ENCODE measurements at regions of chr17 and their contacts with region 1.

Region 1: DNA sequence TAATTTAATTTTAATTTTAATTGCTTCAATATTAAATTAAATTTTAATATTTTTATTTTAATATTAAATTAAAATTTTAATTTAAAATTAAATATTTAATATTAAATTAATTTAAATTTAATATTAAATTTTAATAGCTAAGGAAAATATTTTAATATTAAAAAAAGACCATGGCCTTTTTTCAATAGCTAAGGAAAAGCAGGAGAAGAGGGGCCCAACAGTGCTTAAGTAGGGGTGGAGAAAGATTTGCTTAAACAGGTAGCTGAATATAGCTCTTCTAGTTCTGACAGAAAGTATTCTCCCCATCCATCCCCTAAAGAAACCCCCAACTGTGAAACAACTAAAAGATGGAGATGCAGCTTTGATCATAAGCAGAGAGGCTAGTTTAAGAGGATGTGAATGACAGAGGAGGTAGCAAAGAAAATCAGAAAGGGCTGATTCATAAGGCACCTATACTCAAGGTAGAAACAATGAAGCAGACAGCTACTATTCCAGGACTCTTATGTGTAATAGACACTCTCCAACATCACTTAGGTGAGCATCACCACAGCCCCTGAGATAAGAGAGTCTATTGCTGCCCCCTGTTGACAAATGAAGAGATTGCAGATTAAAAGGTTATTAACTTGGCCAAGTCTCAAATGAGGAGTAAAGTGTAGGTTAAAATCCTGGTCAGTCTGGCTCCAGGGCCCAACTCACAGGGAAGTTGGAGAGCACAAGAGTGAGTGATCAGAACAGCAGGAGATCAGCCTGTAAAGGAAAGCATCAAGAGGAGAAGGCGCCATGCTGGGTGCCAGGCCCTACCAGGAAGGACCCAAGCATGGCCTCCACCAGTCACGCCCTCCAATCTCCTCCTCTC is 7.8 kb upstream of the RNASEK start:
- DNase-seq: peak; percentile 49 to 73
- H3K4me3 ChIP-seq: no peak overlapping the region
- H3K27ac ChIP-seq: no peak overlapping the region
- H3K4me1 ChIP-seq: no peaks in the 10 kb centered on the region
- H3K27me3 ChIP-seq: no peaks in the 10 kb centered on the region
- CTCF ChIP-seq: peak; percentile 95

Region 2: GRCh38 chr17:5971969-5972368 is 1032.7 kb before region 1 on chr17:
- CTCF ChIA-PET with region 1: interaction called, 17 read pairs
- POLR2A ChIA-PET with region 1: no interaction called
- intact Hi-C with region 1: no loop called
- DNase-seq: no peak
- H3K4me3 ChIP-seq: no peak overlapping the region
- H3K27ac ChIP-seq: no peak overlapping the region
- H3K4me1 ChIP-seq: no peaks in the 10 kb centered on the region
- H3K27me3 ChIP-seq: peaks cover 55% of the 10 kb centered on the region
- CTCF ChIP-seq: no peak

Region 3: DNA sequence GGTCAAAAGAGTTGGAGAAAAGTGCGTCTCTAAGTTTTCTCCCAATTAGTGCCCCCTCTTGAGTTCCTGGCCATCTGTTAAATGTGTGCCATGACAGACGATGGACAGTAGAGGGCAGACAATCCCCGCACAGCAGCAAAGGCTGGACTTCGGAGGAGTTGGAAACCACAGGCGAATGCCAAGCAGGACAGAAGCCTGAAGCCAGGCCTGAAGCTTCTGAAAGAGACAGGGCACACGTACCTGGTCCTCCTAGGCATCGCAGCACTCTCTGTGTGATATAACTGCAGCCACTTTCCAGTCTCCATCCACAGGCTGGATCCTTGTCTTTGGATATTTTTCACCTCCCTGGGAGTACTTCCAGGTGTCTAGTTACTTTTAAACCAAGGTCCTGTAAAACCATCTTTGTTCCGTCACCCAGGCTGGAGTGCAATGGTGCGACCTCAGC is 338.5 kb before region 1 on chr17:
- CTCF ChIA-PET with region 1: interaction called, 11 read pairs
- POLR2A ChIA-PET with region 1: no interaction called
- intact Hi-C with region 1: loop called (anchors 1 kb)
- DNase-seq: peak; percentile 67 to 84
- H3K4me3 ChIP-seq: no peak overlapping the region
- H3K27ac ChIP-seq: no peak overlapping the region
- H3K4me1 ChIP-seq: peaks cover 37% of the 10 kb centered on the region
- H3K27me3 ChIP-seq: no peaks in the 10 kb centered on the region
- CTCF ChIP-seq: peak; percentile 96

Region 4: DNA sequence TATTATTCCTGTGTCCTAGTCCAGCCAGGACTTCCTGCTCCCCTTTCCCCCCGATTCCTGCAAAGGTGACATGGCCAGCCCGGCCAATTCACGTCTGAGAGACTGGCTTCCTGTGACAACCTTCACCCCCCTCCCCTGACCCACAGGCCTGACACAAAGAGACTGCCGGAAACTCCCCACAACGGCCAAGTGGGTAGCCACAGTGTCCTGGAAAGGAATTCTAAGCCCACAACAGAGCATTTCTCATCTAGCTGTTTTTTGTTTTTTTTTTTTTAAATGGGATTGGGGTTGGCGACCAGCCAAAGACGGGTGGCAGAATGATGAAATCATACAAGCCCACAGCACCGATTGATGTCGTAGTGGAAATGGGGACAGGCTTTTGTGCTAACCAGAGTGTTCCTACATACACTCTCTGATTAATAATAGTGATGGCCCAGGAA is 251.6 kb before region 1 on chr17:
- CTCF ChIA-PET with region 1: no interaction called
- POLR2A ChIA-PET with region 1: no interaction called
- intact Hi-C with region 1: no loop called
- DNase-seq: peak in 1 of 2 experiments; percentile 60
- H3K4me3 ChIP-seq: peak overlapping the region; percentile 10; the same call in 1 of the 2 replicates
- H3K27ac ChIP-seq: peak overlapping the region; percentile 94
- H3K4me1 ChIP-seq: peaks cover 22% of the 10 kb centered on the region
- H3K27me3 ChIP-seq: no peaks in the 10 kb centered on the region
- CTCF ChIP-seq: no peak

Region 5: DNA sequence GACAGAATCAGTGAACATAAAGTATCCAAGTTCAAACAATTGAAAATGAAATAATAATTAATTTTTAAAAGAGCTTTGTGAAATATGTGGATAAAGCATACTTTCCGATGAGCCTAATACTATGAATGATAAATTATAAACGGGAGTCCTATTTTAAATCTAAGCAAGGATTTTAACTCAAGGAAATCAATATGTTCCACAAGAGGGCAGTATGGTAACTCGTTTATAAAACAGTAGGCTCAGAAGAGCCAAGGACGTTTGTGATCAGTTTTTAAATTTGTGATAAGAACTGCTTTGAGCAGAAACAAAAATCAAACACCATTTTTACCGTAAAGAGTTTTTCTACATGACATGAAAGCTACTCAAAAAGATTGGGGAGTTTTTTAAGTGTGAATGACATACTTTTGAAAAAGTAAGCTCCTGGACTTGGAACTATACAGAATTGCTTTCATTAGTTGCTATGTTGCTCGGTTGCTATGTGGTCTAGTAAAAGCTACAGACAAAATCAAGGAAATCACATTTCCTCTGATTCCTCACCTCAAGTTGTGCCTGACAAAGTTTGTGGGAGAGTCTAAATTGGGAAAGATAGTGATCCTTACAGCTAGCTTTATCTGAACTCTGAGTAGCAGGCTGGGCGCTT is 161.3 kb before region 1 on chr17:
- CTCF ChIA-PET with region 1: interaction called, 9 read pairs
- POLR2A ChIA-PET with region 1: no interaction called
- intact Hi-C with region 1: loop called (anchors 2 kb)
- DNase-seq: peak in 1 of 2 experiments; percentile 49
- H3K4me3 ChIP-seq: no peak overlapping the region
- H3K27ac ChIP-seq: no peak overlapping the region
- H3K4me1 ChIP-seq: no peaks in the 10 kb centered on the region
- H3K27me3 ChIP-seq: no peaks in the 10 kb centered on the region
- CTCF ChIP-seq: peak; percentile 78

Region 6: GRCh38 chr17:6969323-6969726 is 35.3 kb before region 1 on chr17:
- CTCF ChIA-PET with region 1: no interaction called
- POLR2A ChIA-PET with region 1: interaction called, 23 read pairs
- intact Hi-C with region 1: no loop called
- DNase-seq: no peak
- H3K4me3 ChIP-seq: no peak overlapping the region
- H3K27ac ChIP-seq: peak overlapping the region; percentile 43
- H3K4me1 ChIP-seq: peaks cover 9% of the 10 kb centered on the region
- H3K27me3 ChIP-seq: no peaks in the 10 kb centered on the region
- CTCF ChIP-seq: no peak

Region 7: DNA sequence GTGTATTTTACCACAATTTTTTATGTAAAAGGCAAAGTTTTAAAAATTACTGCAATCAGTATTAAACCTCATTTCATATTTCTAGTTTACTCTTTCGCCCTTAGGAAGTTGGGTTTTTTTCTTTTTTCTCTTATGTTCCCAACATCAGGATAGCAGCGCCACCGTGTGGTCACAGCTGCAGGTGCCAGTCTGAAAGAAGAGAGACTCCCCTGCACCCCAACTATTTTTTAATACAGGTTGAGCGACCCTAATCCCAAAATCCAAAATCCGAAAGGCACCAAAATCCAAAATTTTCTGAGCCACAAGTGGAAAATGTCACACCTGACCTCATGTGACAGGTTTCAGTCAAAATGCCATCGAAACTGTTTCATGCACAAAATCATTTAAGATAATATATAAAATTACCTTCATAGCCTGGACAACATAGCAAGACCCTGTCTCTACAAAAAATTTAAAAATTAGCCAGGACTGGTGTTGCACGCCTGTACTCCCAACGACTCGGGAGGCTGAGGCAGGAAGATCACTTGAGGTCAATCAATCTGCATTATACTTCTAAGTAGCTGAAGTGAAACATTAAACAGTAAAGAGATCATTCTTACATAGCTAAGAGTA is 131.7 kb after region 1 on chr17:
- CTCF ChIA-PET with region 1: interaction called, 12 read pairs
- POLR2A ChIA-PET with region 1: no interaction called
- intact Hi-C with region 1: no loop called
- DNase-seq: peak; percentile 42 to 70
- H3K4me3 ChIP-seq: peak overlapping the region; percentile 50
- H3K27ac ChIP-seq: no peak overlapping the region
- H3K4me1 ChIP-seq: peaks cover 16% of the 10 kb centered on the region
- H3K27me3 ChIP-seq: no peaks in the 10 kb centered on the region
- CTCF ChIP-seq: peak; percentile 98

Measured in PC-9 (cell line).